ENCODE measurements at regions of chr22 and their contacts with region 1.

Region 1: DNA sequence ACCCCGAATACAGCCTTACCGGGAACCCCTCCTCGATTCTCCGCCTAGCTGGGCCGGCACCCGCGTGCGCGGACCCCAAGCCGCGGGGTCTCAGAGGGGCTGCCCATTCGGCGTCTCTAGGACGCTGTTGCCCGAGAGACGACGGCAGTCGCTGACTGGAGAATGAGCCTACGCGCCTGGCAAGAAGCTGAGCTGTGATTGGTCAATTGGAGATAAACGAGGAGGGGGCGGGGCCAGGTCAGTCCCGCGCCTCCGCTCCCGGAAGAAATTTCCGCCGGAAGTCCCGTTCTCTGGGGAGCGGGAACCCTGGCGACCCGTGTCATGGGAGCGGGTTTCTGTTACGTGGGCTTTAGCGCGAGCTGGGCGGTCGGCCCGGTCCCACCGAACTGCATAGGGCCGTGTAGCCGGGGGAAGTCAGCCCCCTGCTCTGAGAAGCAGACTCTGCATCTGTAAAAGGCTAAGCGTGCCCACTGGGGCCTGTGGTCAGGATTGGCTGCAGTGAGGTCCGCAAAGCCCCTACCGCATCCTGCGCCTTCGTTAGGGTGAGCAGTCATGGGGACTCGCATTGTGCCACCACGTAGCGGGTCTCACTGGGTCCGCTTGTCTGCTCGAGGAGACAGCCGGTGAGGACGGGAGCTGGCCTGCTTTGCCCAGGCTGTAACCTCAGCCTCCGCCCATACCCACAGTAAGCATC is at the start of gene EFCAB6:
- DNase-seq: peak; percentile 80 to 96 (median 86)
- ATAC-seq: peak; percentile 84
- H3K4me3 ChIP-seq: peak within 1 kb of the TSS; percentile 94
- H3K4me3 Mint-ChIP-seq: peak within 1 kb of the TSS; percentile 96
- H3K27ac ChIP-seq: peak within 1 kb of the TSS; percentile 51 to 59
- H3K27ac Mint-ChIP-seq: peak within 1 kb of the TSS; percentile 88
- H3K4me1 ChIP-seq: peaks cover 17% of the 10 kb centered on the region
- H3K4me1 Mint-ChIP-seq: peaks cover 27% of the 10 kb centered on the region
- H3K27me3 ChIP-seq: no peaks in the 10 kb centered on the region
- H3K27me3 Mint-ChIP-seq: no peaks in the 10 kb centered on the region
- CTCF ChIP-seq: no peak
- total RNA-seq, gene EFCAB6: 0.17 to 0.36 TPM

Region 2: GRCh38 chr22:43777049-43777685 is 35.1 kb before region 1 on chr22:
- CTCF ChIA-PET with region 1: no interaction called
- POLR2A ChIA-PET with region 1: no interaction called
- intact Hi-C with region 1: no loop called
- DNase-seq: no peak
- ATAC-seq: no peak
- H3K4me3 ChIP-seq: no peak overlapping the region
- H3K4me3 Mint-ChIP-seq: no peak overlapping the region
- H3K27ac ChIP-seq: no peak overlapping the region
- H3K27ac Mint-ChIP-seq: no peak overlapping the region
- H3K4me1 ChIP-seq: no peaks in the 10 kb centered on the region
- H3K4me1 Mint-ChIP-seq: no peaks in the 10 kb centered on the region
- H3K27me3 ChIP-seq: peaks cover 0 to 2% of the 10 kb centered on the region in 2 experiments
- H3K27me3 Mint-ChIP-seq: no peaks in the 10 kb centered on the region
- CTCF ChIP-seq: no peak

Region 3: DNA sequence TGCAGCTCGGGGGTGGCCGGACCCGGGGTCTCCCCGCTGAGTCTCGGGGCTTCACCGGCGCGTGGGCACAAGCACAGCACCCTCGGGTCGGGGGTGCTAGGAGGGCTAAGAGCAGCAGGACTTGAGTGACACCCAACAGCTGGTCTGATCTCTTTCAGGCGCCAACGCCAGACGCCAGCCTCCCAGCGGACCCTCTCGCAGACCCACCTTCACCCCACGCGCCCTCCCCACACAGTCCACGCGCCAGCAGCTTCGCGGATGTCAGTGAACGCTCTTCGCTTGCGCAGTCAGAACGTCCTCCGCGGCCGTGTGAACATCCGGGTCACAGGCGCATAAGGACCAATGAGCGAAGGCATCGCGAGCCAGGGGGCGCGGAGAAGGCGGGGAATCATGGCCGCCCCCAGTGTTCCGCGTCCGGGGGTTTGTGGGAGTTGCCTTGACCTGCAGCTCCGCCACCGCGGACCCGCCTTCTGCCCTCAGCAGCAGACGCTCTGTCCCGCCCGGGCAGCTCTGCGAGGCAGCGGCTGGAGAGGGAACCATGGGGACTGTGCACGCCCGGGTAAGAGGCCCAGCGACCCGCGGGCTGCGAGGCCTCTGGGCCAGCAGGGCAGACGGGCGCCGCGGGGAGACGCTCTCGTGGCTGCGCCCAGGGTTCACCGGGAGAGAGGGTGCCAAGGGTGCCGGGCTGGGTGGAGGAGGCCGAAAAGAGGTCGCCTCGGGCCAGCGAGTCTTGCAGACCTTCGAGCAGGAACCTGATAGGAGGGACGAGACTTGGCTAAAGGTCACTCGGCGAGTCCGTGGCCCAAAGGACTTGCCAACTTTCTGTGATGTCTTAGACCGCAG is 143.0 kb after region 1 on chr22 and contains the start of gene SAMM50:
- CTCF ChIA-PET with region 1: no interaction called
- POLR2A ChIA-PET with region 1: interaction called, 5 read pairs
- intact Hi-C with region 1: loop called in 1 of 2 experiments (anchors 1 kb)
- DNase-seq: peak; percentile 82 to 95 (median 86)
- ATAC-seq: peak; percentile 96
- H3K4me3 ChIP-seq: peak within 1 kb of the TSS; percentile 95
- H3K4me3 Mint-ChIP-seq: peak within 1 kb of the TSS; percentile 98
- H3K27ac ChIP-seq: peak within 1 kb of the TSS; percentile 53 to 68
- H3K27ac Mint-ChIP-seq: peak within 1 kb of the TSS; percentile 89
- H3K4me1 ChIP-seq: peaks cover 31% of the 10 kb centered on the region
- H3K4me1 Mint-ChIP-seq: peaks cover 51% of the 10 kb centered on the region
- H3K27me3 ChIP-seq: no peaks in the 10 kb centered on the region
- H3K27me3 Mint-ChIP-seq: no peaks in the 10 kb centered on the region
- CTCF ChIP-seq: no peak
- total RNA-seq, gene SAMM50: 15.2 to 18.0 TPM